Calu3 (cell line): ENCODE measurements at regions of chr1 and their contacts with region 1.

Region 1: GRCh38 chr1:230104395-230105244 is 37.6 kb downstream of the GALNT2 start:
- DNase-seq: peak; percentile 98
- H3K4me3 Mint-ChIP-seq: peak overlapping the region; percentile 72
- H3K27ac Mint-ChIP-seq: peak overlapping the region; percentile 80
- H3K4me1 Mint-ChIP-seq: peaks cover 82% of the 10 kb centered on the region
- H3K27me3 Mint-ChIP-seq: no peaks in the 10 kb centered on the region
- CTCF ChIP-seq: no peak

Region 2: DNA sequence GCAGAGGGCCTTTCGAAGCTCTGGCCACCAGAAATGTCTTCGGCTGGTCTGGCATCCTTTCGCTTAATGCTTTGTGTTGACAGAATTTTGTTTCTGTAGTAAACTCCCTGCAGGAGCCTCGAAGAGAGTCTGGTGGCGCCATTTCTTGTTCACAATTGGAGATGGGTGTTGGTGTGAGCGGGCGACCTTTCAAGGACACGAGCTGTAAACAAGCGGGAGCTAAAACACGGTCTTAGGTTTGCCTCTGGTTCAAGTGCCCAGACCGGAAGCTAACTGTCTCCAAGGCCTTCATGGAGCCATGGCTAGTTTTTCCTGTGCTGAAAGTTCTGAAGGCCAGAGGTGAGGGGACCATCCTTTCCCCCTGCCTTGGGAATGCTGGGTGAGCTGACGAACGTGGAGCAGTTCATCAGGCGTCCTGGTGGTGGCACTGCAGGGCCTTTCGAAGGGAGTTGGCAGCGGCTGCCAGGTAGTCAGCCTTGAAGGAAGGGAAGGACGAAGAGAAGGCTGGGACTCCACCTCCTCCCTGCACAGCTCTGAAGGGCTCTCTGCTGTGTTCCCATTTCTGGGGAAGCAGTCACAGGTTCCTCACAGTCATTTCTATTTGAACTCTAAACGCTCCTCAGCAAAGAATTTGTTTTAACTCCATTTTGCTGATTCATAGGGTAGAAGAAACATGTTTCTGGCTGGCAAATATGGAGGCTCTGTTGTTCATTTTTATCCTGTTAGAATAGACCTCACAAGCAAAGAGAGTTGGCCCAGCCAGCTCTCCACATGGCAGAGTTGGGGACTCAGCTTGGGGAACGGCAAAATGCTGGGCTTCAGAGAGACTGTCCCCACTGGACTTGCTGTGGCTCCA is 443.4 kb before region 1 on chr1:
- CTCF ChIA-PET with region 1: no interaction called
- intact Hi-C with region 1: loop called (anchors 10 kb)
- DNase-seq: peak; percentile 89
- H3K4me3 Mint-ChIP-seq: no peak overlapping the region
- H3K27ac Mint-ChIP-seq: peak overlapping the region; percentile 49
- H3K4me1 Mint-ChIP-seq: no peaks in the 10 kb centered on the region
- H3K27me3 Mint-ChIP-seq: no peaks in the 10 kb centered on the region
- CTCF ChIP-seq: peak; percentile 92

Region 3: DNA sequence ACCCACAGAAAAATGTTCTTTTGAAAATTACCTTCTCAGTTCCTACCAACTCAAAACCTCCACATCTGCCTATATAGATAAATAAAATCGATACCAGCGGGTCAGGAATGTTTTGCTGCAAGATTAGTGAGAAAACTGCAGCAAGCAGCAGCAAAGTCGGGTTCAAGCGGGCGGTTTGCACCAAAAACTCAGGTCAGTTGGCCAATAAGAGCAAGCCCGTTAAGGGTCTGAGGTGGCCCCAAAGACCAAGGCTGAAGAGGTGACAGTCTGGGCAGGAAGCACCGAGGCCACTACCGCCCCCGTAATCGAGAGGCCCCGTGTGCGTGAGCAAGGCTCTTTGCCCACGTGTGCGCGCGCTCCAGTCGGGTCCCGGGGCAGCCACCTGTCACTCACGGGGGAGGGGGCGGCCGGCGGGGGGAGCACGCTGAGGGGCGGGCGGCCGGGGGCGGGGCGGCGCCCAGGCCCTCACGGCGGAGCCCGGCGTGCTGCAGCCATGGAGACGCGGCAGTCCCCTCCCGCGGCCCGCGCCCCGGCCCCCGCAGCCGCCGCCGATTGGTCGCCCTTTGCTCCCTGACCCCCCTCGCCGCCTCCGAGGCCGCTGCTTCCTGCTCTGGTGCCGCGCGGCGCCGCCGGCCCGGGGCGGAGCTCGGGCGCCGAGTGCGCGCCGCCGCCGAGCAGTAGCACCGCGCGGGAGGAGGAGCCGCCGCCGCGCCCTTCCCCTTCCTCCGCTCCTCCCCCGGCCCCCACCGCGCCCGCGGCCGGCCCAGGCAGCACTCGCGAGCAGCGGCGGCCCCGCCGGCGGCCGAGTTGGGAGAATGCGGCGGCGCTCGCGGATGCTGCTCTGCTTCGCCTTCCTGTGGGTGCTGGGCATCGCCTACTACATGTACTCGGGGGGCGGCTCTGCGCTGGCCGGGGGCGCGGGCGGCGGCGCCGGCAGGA is 37.9 kb before region 1 on chr1 and contains the start of gene GALNT2:
- CTCF ChIA-PET with region 1: interaction called, 6 read pairs
- intact Hi-C with region 1: loop called (anchors 2 kb)
- DNase-seq: peak; percentile 94
- H3K4me3 Mint-ChIP-seq: peak within 1 kb of the TSS; percentile 99
- H3K27ac Mint-ChIP-seq: peak within 1 kb of the TSS; percentile 54
- H3K4me1 Mint-ChIP-seq: peaks cover 33% of the 10 kb centered on the region
- H3K27me3 Mint-ChIP-seq: no peaks in the 10 kb centered on the region
- CTCF ChIP-seq: no peak
- total RNA-seq, gene GALNT2: 136 and 141 TPM in 2 replicates

Region 4: GRCh38 chr1:230090194-230090711 is 14.4 kb before region 1 on chr1:
- CTCF ChIA-PET with region 1: interaction called, 6 read pairs
- intact Hi-C with region 1: loop called (anchors 1 kb)
- DNase-seq: no peak
- H3K4me3 Mint-ChIP-seq: peak overlapping the region; percentile 1
- H3K27ac Mint-ChIP-seq: peak overlapping the region; percentile 7
- H3K4me1 Mint-ChIP-seq: peaks cover 79% of the 10 kb centered on the region
- H3K27me3 Mint-ChIP-seq: no peaks in the 10 kb centered on the region
- CTCF ChIP-seq: no peak

Region 5: DNA sequence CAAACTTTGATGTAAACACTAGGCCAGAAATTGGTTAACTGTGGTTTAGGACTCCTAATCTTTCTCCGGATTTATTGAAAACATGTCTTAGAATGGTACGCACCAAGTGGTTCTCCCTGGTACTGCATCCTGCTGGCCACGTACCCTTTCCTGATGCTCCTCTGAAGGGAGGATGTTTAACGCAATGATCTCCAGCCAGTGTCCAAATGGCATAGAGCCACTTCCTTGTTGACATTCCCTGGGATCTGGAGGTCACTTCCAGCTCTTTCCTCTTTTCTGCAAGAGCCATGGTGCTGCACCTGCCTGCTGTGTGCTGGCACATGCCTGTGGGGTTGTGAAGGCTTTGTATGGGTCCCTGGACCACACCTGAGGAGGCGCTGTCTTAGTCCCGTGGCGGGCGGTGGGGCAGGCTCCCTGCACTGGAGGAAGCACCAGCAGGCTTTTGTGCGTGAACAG is 16.3 kb after region 1 on chr1:
- CTCF ChIA-PET with region 1: no interaction called
- intact Hi-C with region 1: no loop called
- DNase-seq: peak; percentile 38
- H3K4me3 Mint-ChIP-seq: no peak overlapping the region
- H3K27ac Mint-ChIP-seq: peak overlapping the region; percentile 22
- H3K4me1 Mint-ChIP-seq: peaks cover 24% of the 10 kb centered on the region
- H3K27me3 Mint-ChIP-seq: no peaks in the 10 kb centered on the region
- CTCF ChIP-seq: peak; percentile 71

Region 6: GRCh38 chr1:230208619-230209261 is 104.1 kb after region 1 on chr1:
- CTCF ChIA-PET with region 1: no interaction called
- intact Hi-C with region 1: loop called (anchors 5 kb)
- DNase-seq: no peak
- H3K4me3 Mint-ChIP-seq: no peak overlapping the region
- H3K27ac Mint-ChIP-seq: no peak overlapping the region
- H3K4me1 Mint-ChIP-seq: peaks cover 89% of the 10 kb centered on the region
- H3K27me3 Mint-ChIP-seq: no peaks in the 10 kb centered on the region
- CTCF ChIP-seq: no peak

Region 7: GRCh38 chr1:230310381-230311163 is 206.0 kb after region 1 on chr1:
- CTCF ChIA-PET with region 1: no interaction called
- intact Hi-C with region 1: loop called (anchors 10 kb)
- DNase-seq: peak; percentile 82
- H3K4me3 Mint-ChIP-seq: no peak overlapping the region
- H3K27ac Mint-ChIP-seq: peak overlapping the region; percentile 7
- H3K4me1 Mint-ChIP-seq: peaks cover 36% of the 10 kb centered on the region
- H3K27me3 Mint-ChIP-seq: no peaks in the 10 kb centered on the region
- CTCF ChIP-seq: peak; percentile 79